ENCODE measurements at regions of chr3 and their contacts with region 1.

Region 1: GRCh38 chr3:169812332-169813235 is at the starts of genes LRRC34 and LRRIQ4:
- DNase-seq: peak; percentile 90
- ATAC-seq: peak; percentile 78
- H3K4me3 Mint-ChIP-seq: peak within 1 kb of the TSS; percentile 78
- H3K27ac Mint-ChIP-seq: peak within 1 kb of the TSS; percentile 88
- H3K4me1 Mint-ChIP-seq: peaks cover 57% of the 10 kb centered on the region
- H3K27me3 Mint-ChIP-seq: peaks cover under 1% of the 10 kb centered on the region
- total RNA-seq, gene LRRC34: 12.0 to 15.0 TPM
- total RNA-seq, gene LRRIQ4: 0.13 to 0.16 TPM

Region 2: GRCh38 chr3:169634618-169635239 is 177.9 kb before region 1 on chr3:
- CTCF ChIA-PET with region 1: no interaction called
- POLR2A ChIA-PET with region 1: no interaction called
- DNase-seq: no peak
- ATAC-seq: no peak
- H3K4me3 Mint-ChIP-seq: no peak overlapping the region
- H3K27ac Mint-ChIP-seq: no peak overlapping the region
- H3K4me1 Mint-ChIP-seq: no peaks in the 10 kb centered on the region
- H3K27me3 Mint-ChIP-seq: peaks cover 10% of the 10 kb centered on the region

Region 3: GRCh38 chr3:169764452-169765274 is 47.9 kb before region 1 on chr3 and contains the start of gene TERC:
- CTCF ChIA-PET with region 1: interaction called, 12 read pairs
- POLR2A ChIA-PET with region 1: interaction called, 4 read pairs
- DNase-seq: peak; percentile 96
- ATAC-seq: peak; percentile 87
- H3K4me3 Mint-ChIP-seq: peak within 1 kb of the TSS; percentile 92
- H3K27ac Mint-ChIP-seq: peak within 1 kb of the TSS; percentile 98
- H3K4me1 Mint-ChIP-seq: peaks cover 35% of the 10 kb centered on the region
- H3K27me3 Mint-ChIP-seq: no peaks in the 10 kb centered on the region
- total RNA-seq, gene TERC: 6.9 to 10.8 TPM

Region 4: DNA sequence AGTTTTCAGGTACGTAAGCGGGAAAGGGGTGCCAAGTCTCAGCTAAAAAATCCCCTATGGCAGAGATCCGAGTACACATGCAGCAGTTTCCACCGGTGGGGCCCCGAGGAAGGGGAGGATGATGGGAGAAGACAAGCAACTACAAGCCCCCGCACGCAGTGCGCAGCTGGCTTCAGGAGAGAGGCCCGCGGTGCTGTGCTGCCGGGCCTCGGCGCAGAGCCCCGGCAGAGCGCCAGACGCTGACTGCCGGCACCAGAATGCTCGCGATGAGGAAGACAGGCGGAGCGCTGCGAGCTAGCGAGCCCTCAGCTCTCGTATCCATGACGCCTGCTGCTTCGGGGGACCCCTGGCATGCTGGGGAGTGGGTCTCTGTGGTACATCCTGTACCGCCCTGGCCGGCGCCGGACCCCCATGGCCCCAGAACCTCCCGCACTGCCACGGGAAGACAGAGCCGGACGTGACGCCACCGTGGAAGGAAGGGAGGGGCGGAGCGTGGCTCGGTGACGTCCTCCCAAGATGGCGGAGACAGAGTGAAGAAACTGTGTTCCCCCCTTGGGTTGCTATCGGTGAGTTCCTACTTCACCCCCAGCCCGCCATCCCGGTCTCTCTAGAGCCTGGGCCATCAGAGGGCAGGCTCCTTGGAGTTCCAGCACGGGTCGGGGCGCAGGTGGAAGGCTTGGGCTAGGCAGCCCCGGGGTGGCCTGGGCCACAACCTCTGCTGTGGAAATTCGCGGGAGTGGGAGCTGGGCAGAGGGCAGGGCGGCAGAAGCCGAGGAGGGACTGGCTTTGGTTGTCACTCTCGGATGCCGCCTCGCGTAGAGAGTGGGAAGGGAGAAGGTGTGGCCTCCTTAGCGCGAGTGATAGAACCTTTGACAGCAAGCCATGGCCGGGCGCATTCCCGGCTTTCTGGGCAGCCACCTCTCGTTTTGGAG is 39.4 kb before region 1 on chr3 and contains the start of gene MYNN:
- CTCF ChIA-PET with region 1: interaction called, 6 read pairs
- POLR2A ChIA-PET with region 1: interaction called, 43 read pairs
- DNase-seq: peak; percentile 95
- ATAC-seq: peak; percentile 82
- H3K4me3 Mint-ChIP-seq: peak within 1 kb of the TSS; percentile 98
- H3K27ac Mint-ChIP-seq: peak within 1 kb of the TSS; percentile 100
- H3K4me1 Mint-ChIP-seq: peaks cover 42% of the 10 kb centered on the region
- H3K27me3 Mint-ChIP-seq: no peaks in the 10 kb centered on the region
- total RNA-seq, gene MYNN: 15.7 to 16.4 TPM

Region 5: GRCh38 chr3:169886671-169887070 is 74.1 kb after region 1 on chr3:
- CTCF ChIA-PET with region 1: no interaction called
- POLR2A ChIA-PET with region 1: no interaction called
- DNase-seq: no peak
- ATAC-seq: no peak
- H3K4me3 Mint-ChIP-seq: no peak overlapping the region
- H3K27ac Mint-ChIP-seq: no peak overlapping the region
- H3K4me1 Mint-ChIP-seq: peaks cover 3% of the 10 kb centered on the region
- H3K27me3 Mint-ChIP-seq: peaks cover 6% of the 10 kb centered on the region